ENCODE measurements at regions of chr4 and their contacts with region 1.

Region 1: GRCh38 chr4:30714408-30715027 is 5.7 kb upstream of the PCDH7 start:
- DNase-seq: peak; percentile 38
- H3K4me3 ChIP-seq: no peak overlapping the region
- H3K27ac ChIP-seq: no peak overlapping the region
- H3K4me1 ChIP-seq: peaks cover 11% of the 10 kb centered on the region
- H3K27me3 ChIP-seq: no peaks in the 10 kb centered on the region
- CTCF ChIP-seq: peak; percentile 82 to 87

Region 2: GRCh38 chr4:30669824-30670605 is 44.5 kb before region 1 on chr4:
- CTCF ChIA-PET with region 1: no interaction called
- dilution Hi-C with region 1: no loop called
- in situ Hi-C with region 1: no loop called
- intact Hi-C with region 1: no loop called
- DNase-seq: no peak
- H3K4me3 ChIP-seq: no peak overlapping the region
- H3K27ac ChIP-seq: no peak overlapping the region
- H3K4me1 ChIP-seq: no peaks in the 10 kb centered on the region
- H3K27me3 ChIP-seq: no peaks in the 10 kb centered on the region
- CTCF ChIP-seq: no peak

Region 3: DNA sequence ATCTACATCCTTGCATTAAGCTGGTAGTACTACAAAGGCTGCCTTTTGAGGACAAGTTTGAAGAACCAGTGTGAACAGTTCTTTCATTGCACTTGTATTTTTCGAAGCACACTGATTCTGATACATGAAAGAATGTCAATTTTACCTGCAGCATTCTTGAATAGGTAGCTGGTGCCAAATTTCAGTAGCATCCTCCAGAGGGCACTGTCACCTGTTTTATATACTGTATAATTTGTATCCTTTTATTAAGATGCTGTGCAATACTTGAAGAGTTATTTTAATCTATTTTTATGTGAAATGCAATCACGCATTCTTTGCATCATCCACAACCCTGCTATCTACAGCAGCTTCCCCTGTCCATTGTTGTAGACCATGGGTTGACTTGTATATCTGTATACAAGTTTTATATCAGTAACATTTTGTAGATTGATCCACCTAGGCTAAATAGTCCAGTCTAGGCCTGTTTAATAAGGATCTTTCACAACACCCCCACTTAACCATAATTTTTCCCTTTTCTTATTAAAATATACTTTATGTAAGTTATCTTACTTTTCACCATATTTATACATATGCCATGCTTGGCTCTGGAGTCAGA is 331.3 kb after region 1 on chr4:
- CTCF ChIA-PET with region 1: no interaction called
- dilution Hi-C with region 1: no loop called
- in situ Hi-C with region 1: loop called in 1 of 2 experiments (anchors 25 kb)
- intact Hi-C with region 1: loop called (anchors 2 kb)
- DNase-seq: peak; percentile 14
- H3K4me3 ChIP-seq: no peak overlapping the region
- H3K27ac ChIP-seq: no peak overlapping the region
- H3K4me1 ChIP-seq: no peaks in the 10 kb centered on the region
- H3K27me3 ChIP-seq: no peaks in the 10 kb centered on the region
- CTCF ChIP-seq: peak; percentile 59 to 71

Region 4: GRCh38 chr4:31160146-31160545 is 445.6 kb after region 1 on chr4:
- CTCF ChIA-PET with region 1: no interaction called
- dilution Hi-C with region 1: no loop called
- in situ Hi-C with region 1: no loop called
- intact Hi-C with region 1: loop called (anchors 10 kb)
- DNase-seq: no peak
- H3K4me3 ChIP-seq: no peak overlapping the region
- H3K27ac ChIP-seq: no peak overlapping the region
- H3K4me1 ChIP-seq: no peaks in the 10 kb centered on the region
- H3K27me3 ChIP-seq: peaks cover 3% of the 10 kb centered on the region
- CTCF ChIP-seq: no peak

Region 5: DNA sequence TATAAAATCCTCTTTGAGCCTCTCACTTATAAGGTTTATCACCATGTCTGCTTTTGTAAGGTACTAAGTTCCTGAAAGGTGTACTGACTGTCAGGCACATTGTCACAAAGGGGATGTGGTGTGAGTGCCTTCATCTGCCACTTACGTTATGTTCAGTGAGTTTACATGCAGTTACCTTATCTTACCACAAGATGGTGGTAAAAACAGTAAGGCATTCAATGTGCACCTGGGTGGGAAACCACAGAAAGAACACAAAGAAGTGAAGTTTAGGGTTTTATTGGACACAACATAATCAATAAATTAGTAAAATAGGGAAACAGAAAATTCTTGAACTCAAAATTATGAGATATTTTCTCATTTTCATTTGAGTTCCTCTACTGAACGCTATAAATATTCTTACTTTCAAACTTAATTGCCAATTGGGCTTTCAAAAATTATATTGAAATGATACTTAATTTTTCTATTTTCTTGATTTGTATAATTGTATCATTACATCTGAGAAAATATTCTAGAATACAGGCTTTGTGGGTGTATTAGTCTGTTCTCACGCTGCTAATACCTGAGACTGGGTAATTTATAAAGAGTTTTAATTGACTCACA is 656.4 kb after region 1 on chr4:
- CTCF ChIA-PET with region 1: no interaction called
- dilution Hi-C with region 1: no loop called
- in situ Hi-C with region 1: loop called in 1 of 2 experiments (anchors 25 kb)
- intact Hi-C with region 1: loop called (anchors 2 kb)
- DNase-seq: peak; percentile 12
- H3K4me3 ChIP-seq: no peak overlapping the region
- H3K27ac ChIP-seq: no peak overlapping the region
- H3K4me1 ChIP-seq: no peaks in the 10 kb centered on the region
- H3K27me3 ChIP-seq: no peaks in the 10 kb centered on the region
- CTCF ChIP-seq: peak; percentile 66 to 84

Region 6: DNA sequence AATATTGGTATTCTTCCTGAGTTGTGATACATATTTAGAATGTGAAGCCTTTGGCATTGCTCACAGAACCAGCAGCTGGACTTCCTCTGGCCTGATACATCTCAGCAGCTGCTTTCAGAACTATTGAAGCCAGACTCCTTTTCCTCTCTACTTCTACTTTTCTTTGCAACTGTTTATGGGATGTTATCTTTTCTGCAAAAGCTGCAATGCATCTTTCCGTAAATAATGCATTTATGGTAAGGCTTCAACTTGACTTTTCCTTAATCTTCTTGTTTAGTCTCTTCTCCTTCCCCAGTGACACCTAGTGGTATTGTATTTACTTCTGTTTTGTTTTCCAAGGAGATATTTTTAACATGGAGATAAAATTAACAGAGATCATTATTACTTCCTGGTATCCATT is 1554.3 kb after region 1 on chr4:
- CTCF ChIA-PET with region 1: no interaction called
- dilution Hi-C with region 1: no loop called
- in situ Hi-C with region 1: no loop called
- intact Hi-C with region 1: loop called (anchors 5 kb)
- DNase-seq: peak; percentile 4
- H3K4me3 ChIP-seq: no peak overlapping the region
- H3K27ac ChIP-seq: no peak overlapping the region
- H3K4me1 ChIP-seq: no peaks in the 10 kb centered on the region
- H3K27me3 ChIP-seq: no peaks in the 10 kb centered on the region
- CTCF ChIP-seq: peak; percentile 19 to 45